Motor neuron (in vitro differentiated cells): ENCODE measurements at regions of chr11 and their contacts with region 1.

Region 1: GRCh38 chr11:17978553-17979287 is 34.1 kb downstream of the SERGEF start:
- ATAC-seq: peak; percentile 66 to 91 (median 79)
- H3K4me3 ChIP-seq: no peak overlapping the region
- H3K27ac ChIP-seq: no peak overlapping the region
- H3K4me1 ChIP-seq: no peaks in the 10 kb centered on the region

Region 2: DNA sequence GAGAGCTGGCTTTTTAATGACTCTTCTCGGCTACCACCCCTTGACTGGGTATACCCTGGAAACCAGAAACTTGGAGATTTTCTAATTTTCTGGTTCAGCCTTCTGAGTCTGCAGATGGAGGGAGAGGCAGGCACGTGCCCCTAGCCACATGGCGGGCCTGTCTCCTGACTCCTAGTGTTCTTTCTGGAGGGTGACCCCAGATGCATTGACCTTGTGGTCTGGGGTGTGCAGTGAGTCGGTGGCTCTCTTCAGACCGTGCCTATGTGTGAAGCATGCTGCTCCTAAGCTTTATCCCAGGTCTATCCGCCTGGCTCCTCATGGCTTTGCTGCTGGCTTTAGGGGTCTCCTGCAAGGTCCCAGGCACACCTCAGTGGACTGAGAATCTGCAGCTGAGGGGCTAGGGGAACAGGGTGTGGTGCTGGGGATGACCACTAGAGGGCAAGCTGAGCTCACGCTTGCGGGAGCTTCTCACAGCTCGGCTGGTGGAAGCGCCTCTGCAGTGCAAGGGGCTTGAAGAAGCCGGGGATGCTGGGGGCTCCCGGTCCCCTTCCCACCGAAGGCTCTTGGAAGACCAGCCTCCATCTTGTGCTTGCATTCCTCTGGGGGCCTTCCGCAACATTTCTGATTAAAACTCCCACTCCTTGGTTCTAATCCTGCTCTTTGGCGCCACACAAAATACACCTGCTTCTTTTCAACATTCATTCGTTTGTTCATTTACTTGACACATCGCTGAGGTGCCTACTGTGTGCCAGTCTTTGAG is 379.8 kb before region 1 on chr11:
- in situ Hi-C with region 1: loop called in 5 of 9 experiments (anchors 5 to 25 kb)
- ATAC-seq: peak; percentile 86 to 97 (median 95)
- H3K4me3 ChIP-seq: no peak overlapping the region
- H3K27ac ChIP-seq: no peak overlapping the region
- H3K4me1 ChIP-seq: peaks cover 0 to 8% of the 10 kb centered on the region in 2 donors

Region 3: DNA sequence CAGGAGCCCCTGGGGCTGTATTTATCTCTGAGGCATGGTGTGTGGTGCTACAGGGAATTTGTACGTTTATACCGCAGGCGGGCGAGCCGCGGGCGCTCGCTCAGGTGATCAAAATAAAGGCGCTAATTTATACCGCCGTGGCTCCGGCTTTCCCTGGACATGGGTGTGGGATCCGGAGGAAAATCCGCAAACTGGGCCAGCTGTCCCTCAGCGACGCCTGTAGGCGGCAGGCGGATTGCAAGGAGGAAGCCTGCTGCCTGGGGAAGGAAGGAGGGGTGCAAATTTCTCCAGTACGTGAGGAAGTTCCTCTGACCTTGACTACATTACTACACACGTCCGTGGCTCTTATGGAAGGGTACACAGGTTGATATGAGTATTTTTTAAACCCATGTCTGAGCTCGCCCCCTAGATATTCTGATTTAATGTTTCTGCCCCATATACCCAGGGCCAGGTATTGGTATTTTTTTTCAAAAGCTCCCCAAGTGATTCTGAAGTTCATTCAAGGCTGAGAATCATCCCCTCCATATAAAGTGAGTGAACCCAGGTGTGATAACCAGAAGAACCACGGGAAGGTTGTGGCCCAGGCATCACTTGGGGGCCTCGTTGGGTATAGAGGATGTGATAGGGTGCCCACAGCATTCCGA is 256.6 kb before region 1 on chr11:
- in situ Hi-C with region 1: loop called in 4 of 9 experiments (anchors 10 to 25 kb)
- ATAC-seq: peak in 3 of 8 experiments; percentile 47 to 61 (median 49)
- H3K4me3 ChIP-seq: no peak overlapping the region
- H3K27ac ChIP-seq: no peak overlapping the region
- H3K4me1 ChIP-seq: peaks cover 5 to 11% of the 10 kb centered on the region in 2 donors

Region 4: GRCh38 chr11:17730608-17731462 is 247.9 kb before region 1 on chr11:
- in situ Hi-C with region 1: loop called in 8 of 9 experiments (anchors 10 to 25 kb)
- ATAC-seq: peak; percentile 54 to 73 (median 65)
- H3K4me3 ChIP-seq: no peak overlapping the region
- H3K27ac ChIP-seq: no peak overlapping the region
- H3K4me1 ChIP-seq: peaks cover 0 to under 1% of the 10 kb centered on the region in 2 donors

Region 5: GRCh38 chr11:17760102-17761029 is 218.4 kb before region 1 on chr11:
- in situ Hi-C with region 1: loop called in 1 of 9 experiments (anchors 10 kb)
- ATAC-seq: peak in 6 of 8 experiments; percentile 28 to 93 (median 70)
- H3K4me3 ChIP-seq: no peak overlapping the region
- H3K27ac ChIP-seq: no peak overlapping the region
- H3K4me1 ChIP-seq: peaks cover 12 to 14% of the 10 kb centered on the region in 2 donors

Region 6: DNA sequence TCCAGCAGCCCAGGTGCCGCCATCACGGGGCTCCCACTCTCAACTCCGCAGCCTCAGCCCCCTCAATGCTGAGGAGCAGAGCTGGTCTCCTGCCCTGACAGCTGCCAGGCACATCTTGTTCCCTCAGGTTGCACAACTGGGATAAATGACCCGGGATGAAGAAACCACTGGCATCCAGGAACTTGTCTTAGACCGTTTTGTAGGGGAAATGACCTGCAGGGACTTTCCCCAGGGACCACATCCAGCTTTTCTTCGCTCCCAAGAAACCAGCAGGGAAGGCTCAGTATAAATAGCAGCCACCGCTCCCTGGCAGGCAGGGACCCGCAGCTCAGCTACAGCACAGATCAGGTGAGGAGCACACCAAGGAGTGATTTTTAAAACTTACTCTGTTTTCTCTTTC is 287.2 kb after region 1 on chr11 and contains the start of gene SAA1:
- in situ Hi-C with region 1: no loop called
- ATAC-seq: no peak
- H3K4me3 ChIP-seq: no peak within 1 kb of the TSS
- H3K27ac ChIP-seq: no peak within 1 kb of the TSS
- H3K4me1 ChIP-seq: no peaks in the 10 kb centered on the region
- total RNA-seq, gene SAA1: 1.7 TPM in 1 of 8 experiments, not detected in the others